Activated naive CD4-positive, alpha-beta T cell treated with anti-CD3 and anti-CD28 coated beads for 36 hours (primary cell): ENCODE measurements at regions of chr1 and their contacts with region 1.

Region 1: DNA sequence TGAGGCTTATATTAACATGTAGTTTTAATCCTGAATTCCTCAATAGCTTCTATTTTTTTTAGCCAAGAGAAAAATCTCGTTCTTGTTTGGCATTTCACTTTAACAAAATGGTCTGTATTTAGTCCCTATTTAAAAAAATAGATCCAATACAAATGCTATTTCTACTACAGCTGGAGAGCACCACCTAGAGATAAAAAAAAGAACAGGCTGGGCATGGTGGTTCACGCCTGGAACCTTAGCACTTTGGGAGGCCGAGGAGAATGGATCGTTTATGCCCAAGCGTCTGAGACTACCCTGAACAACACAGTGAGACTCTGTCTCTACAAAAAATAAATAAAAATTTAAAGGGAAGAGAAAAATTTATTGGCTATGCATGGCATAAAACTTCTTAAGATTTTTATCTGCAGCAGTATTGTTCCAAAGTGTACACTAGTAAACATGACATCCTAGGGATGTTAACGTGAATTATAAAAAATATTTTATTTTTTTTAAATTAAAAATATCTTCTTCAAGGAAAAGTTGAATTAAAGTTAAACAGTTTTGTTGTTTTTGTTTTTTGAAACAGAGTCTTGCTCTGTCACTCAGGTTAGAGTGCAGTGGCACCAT is 4.4 kb downstream of the ST7L start:
- DNase-seq: peak; percentile 25
- H3K4me3 Mint-ChIP-seq: no peak overlapping the region
- H3K27ac Mint-ChIP-seq: no peak overlapping the region
- H3K4me1 Mint-ChIP-seq: peaks cover 15% of the 10 kb centered on the region
- H3K27me3 Mint-ChIP-seq: no peaks in the 10 kb centered on the region

Region 2: DNA sequence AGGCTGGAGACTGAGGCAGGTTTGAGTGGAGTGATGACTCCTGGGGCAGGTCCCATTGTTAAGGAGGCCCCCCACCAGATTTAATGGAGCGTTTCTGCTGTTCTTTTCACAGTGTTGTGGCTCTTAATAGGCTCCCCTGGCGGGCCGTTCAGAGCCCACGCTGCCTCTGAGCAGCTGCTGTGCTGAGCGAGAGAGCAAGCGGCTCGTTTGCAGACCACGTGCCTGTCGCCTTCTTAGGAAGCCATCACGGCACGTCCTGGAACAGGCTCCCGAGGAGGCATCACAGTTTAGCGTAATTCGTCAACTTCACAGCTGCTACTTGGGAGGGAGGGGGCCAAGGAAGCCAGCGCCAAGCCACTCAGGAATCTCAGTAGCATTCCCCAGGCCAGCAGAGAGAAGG is 289.1 kb before region 1 on chr1:
- CTCF ChIA-PET with region 1: no interaction called
- intact Hi-C with region 1: no loop called
- DNase-seq: no peak
- H3K4me3 Mint-ChIP-seq: no peak overlapping the region
- H3K27ac Mint-ChIP-seq: no peak overlapping the region
- H3K4me1 Mint-ChIP-seq: no peaks in the 10 kb centered on the region
- H3K27me3 Mint-ChIP-seq: peaks cover 6% of the 10 kb centered on the region

Region 3: DNA sequence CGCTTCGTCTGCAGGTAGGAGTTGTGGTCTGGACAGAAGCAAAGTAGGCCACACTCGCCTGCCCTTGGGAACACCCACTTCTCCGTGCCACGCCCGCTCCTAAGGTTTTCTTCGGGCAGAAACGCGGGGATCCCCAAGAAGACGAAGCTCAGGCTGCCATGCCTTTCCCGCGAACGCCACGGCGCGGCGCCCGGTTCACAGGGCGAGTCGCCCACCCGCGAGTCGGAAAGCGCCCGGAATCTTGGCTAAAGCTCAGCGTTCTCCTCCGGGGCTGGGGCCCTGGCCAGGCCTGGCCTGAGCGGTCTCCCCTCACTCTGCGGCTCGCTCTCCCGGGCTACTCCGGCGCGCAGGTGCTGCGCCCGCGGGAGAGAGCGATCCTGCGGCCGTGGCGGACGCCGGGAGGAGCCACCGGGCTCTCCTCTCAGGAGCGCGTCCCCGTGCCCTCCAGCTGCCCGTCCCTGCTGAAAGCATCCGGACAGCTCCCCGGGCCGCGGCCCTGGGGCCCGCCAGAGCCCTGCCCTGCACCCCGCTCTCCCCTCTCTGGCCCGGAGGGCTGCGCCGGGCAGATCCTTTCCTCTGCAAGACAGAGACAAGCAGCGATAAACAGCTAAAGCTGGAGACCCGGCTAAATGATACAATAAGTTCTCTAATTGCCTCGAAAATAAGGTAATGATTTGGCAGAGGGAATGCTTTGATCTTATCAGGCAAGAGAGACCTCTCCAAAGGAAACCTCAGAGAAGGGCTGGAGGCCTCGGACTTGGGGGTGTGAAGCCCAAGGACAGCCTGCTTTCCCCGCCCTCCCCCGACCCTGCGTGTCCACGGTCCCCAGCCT is 112.5 kb before region 1 on chr1:
- CTCF ChIA-PET with region 1: interaction called, 14 read pairs
- intact Hi-C with region 1: loop called (anchors 1 kb)
- DNase-seq: peak; percentile 73
- H3K4me3 Mint-ChIP-seq: peak overlapping the region; percentile 60
- H3K27ac Mint-ChIP-seq: no peak overlapping the region
- H3K4me1 Mint-ChIP-seq: peaks cover 3% of the 10 kb centered on the region
- H3K27me3 Mint-ChIP-seq: peaks cover 58% of the 10 kb centered on the region